B cell (primary cell): ENCODE measurements at regions of chr5 and their contacts with region 1.

Region 1: GRCh38 chr5:160021831-160022446 is 13.0 kb downstream of the TTC1 start:
- DNase-seq: peak; percentile 78
- ATAC-seq: peak; percentile 92
- H3K4me3 ChIP-seq: no peak overlapping the region
- H3K4me3 Mint-ChIP-seq: no peak overlapping the region
- H3K27ac ChIP-seq: no peak overlapping the region
- H3K27ac Mint-ChIP-seq: no peak overlapping the region
- H3K4me1 ChIP-seq: no peaks in the 10 kb centered on the region
- H3K4me1 Mint-ChIP-seq: peaks cover 5% of the 10 kb centered on the region
- H3K27me3 ChIP-seq: no peaks in the 10 kb centered on the region
- H3K27me3 Mint-ChIP-seq: no peaks in the 10 kb centered on the region
- CTCF ChIP-seq: peak; percentile 95

Region 2: DNA sequence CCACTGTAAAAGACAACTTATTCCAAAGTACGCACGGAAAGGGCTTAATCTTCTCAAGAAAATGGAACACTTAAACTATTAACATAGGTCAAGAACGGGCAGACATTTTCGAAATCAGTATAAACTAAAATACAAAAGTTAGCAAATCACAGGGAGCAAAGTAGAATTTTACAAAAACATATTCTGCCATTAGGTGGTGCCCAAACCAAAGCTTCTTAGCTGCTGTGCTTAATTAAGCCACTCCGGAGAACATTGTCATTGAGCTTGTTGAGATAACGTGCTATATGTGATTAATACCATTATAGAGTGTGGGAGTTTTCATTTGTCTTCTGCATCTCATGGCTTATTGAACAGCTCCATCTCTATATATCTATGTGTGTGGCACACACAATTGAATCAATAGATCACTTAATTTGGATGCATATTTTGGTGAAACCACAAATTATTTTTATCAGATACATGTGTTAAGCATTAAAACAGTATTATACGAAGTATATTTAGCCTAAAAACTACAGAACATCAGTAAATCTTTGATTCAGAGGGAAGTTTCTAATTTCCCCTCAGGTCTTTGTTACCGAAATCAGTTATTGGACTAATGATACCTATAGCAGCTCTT is 735.4 kb before region 1 on chr5:
- CTCF ChIA-PET with region 1: interaction called, 12 read pairs
- POLR2A ChIA-PET with region 1: no interaction called
- intact Hi-C with region 1: no loop called
- DNase-seq: peak; percentile 69
- ATAC-seq: peak; percentile 67
- H3K4me3 ChIP-seq: no peak overlapping the region
- H3K4me3 Mint-ChIP-seq: no peak overlapping the region
- H3K27ac ChIP-seq: no peak overlapping the region
- H3K27ac Mint-ChIP-seq: no peak overlapping the region
- H3K4me1 ChIP-seq: no peaks in the 10 kb centered on the region
- H3K4me1 Mint-ChIP-seq: no peaks in the 10 kb centered on the region
- H3K27me3 ChIP-seq: no peaks in the 10 kb centered on the region
- H3K27me3 Mint-ChIP-seq: no peaks in the 10 kb centered on the region
- CTCF ChIP-seq: peak; percentile 82

Region 3: GRCh38 chr5:159552751-159553150 is 469.2 kb before region 1 on chr5:
- CTCF ChIA-PET with region 1: no interaction called
- POLR2A ChIA-PET with region 1: no interaction called
- intact Hi-C with region 1: no loop called
- DNase-seq: no peak
- ATAC-seq: no peak
- H3K4me3 ChIP-seq: no peak overlapping the region
- H3K4me3 Mint-ChIP-seq: no peak overlapping the region
- H3K27ac ChIP-seq: no peak overlapping the region
- H3K27ac Mint-ChIP-seq: no peak overlapping the region
- H3K4me1 ChIP-seq: no peaks in the 10 kb centered on the region
- H3K4me1 Mint-ChIP-seq: no peaks in the 10 kb centered on the region
- H3K27me3 ChIP-seq: no peaks in the 10 kb centered on the region
- H3K27me3 Mint-ChIP-seq: no peaks in the 10 kb centered on the region
- CTCF ChIP-seq: no peak

Region 4: DNA sequence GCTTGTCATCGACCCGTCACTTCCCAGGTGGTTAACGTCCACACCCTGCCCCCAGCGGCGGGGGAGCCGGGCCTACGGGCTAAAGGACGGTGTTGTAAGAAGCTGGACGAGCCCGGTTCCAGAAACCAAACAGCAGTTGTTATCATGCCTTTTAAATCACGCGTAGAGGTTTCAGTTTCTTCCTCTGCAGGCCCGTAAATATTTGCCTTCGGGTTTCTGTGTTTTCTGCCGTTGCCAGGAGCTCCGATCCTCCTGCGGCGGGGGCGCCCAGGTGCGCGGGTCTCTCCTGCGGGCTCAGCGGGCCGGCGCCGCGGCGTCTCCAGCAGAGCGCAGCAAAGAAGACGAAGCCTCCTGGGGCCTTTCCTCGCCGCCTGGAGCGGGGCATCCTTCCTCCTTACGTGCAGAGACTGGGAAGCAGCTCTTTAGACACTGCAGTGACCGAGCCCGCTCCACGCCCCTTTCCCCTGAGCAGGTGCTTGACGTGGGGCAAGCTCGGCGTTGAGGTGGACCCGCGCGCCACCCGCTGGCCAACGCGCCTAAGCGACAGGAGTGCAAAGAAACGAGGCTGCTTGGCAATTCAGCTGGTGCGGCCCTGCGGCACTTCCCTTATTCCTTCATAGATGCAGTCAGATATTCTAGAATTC is 34.8 kb before region 1 on chr5:
- CTCF ChIA-PET with region 1: no interaction called
- POLR2A ChIA-PET with region 1: no interaction called
- intact Hi-C with region 1: no loop called
- DNase-seq: peak; percentile 88
- ATAC-seq: peak; percentile 98
- H3K4me3 ChIP-seq: peak overlapping the region in 4 of 5 experiments; percentile 42 to 60 (median 54)
- H3K4me3 Mint-ChIP-seq: peak overlapping the region; percentile 79
- H3K27ac ChIP-seq: peak overlapping the region in 1 of 2 donors; percentile 45
- H3K27ac Mint-ChIP-seq: peak overlapping the region; percentile 51
- H3K4me1 ChIP-seq: peaks cover 6 to 7% of the 10 kb centered on the region in 2 donors
- H3K4me1 Mint-ChIP-seq: peaks cover 7% of the 10 kb centered on the region
- H3K27me3 ChIP-seq: peaks cover 0 to 4% (median 0%) of the 10 kb centered on the region in 4 experiments
- H3K27me3 Mint-ChIP-seq: peaks cover 16% of the 10 kb centered on the region
- CTCF ChIP-seq: peak; percentile 79

Region 5: DNA sequence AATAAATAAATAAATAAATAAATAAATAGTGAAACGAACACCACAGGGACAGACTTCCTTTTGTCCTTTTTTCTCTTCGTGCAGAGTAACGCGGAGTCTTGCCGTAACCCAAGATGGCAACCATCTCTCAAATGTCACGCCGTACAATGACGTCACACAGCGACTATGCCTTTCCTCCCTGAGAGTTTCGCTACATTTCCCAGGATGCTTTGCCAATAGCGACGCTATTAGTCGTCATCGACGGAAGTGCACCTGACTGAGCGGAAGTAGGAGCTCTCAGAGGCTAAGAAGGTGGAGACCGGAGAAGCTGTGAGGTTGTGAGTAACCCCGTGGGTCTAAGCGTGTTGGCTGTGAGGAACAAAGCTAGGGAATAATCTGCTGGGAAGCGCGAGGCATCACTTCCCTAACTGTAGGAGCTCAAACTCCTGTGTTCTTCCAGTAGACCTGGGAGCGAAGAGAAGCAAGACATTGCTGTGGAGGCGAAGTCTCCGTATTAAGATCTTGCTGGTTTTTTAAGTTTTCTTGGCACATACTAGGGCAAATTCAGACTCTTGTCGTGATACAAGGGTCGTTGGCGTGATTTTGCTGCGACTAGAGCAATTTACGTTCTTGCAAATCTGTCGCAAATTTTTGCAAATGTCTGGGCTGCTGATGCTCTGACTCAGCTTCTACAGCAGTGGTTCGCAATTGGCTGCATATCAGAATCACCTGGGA is 12.9 kb before region 1 on chr5 and contains the start of gene TTC1:
- CTCF ChIA-PET with region 1: interaction called, 34 read pairs
- POLR2A ChIA-PET with region 1: interaction called, 7 read pairs
- intact Hi-C with region 1: no loop called
- DNase-seq: peak; percentile 98
- ATAC-seq: peak; percentile 97
- H3K4me3 ChIP-seq: peak within 1 kb of the TSS; percentile 85 to 100 (median 98)
- H3K4me3 Mint-ChIP-seq: peak within 1 kb of the TSS; percentile 87
- H3K27ac ChIP-seq: peak within 1 kb of the TSS; percentile 77 to 96
- H3K27ac Mint-ChIP-seq: peak within 1 kb of the TSS; percentile 83
- H3K4me1 ChIP-seq: peaks cover 18 to 19% of the 10 kb centered on the region in 2 donors
- H3K4me1 Mint-ChIP-seq: peaks cover 25% of the 10 kb centered on the region
- H3K27me3 ChIP-seq: no peaks in the 10 kb centered on the region
- H3K27me3 Mint-ChIP-seq: no peaks in the 10 kb centered on the region
- CTCF ChIP-seq: no peak
- total RNA-seq, gene TTC1: 37.5 and 40.4 TPM in 2 replicates

Region 6: DNA sequence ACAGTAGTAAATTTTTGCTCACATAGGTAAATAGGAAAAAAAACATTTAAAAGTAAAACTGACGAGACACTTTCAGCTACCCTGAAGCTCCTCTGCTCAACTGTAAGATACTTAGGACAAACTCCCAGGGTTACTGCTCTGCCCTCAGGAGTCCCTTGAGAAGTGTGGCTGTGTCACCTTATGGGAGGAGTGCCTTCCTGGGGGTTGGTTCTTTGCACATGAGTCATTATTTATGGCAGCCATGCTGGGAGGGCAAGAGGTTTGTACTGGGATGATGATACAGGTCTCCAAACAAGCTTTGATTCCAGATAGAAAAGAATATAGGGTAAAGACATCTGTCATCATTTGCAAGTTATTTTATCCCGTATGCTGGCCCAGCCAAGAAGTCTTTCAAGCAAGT is 32.9 kb after region 1 on chr5:
- CTCF ChIA-PET with region 1: interaction called, 11 read pairs
- POLR2A ChIA-PET with region 1: no interaction called
- intact Hi-C with region 1: no loop called
- DNase-seq: no peak
- ATAC-seq: no peak
- H3K4me3 ChIP-seq: no peak overlapping the region
- H3K4me3 Mint-ChIP-seq: no peak overlapping the region
- H3K27ac ChIP-seq: no peak overlapping the region
- H3K27ac Mint-ChIP-seq: no peak overlapping the region
- H3K4me1 ChIP-seq: no peaks in the 10 kb centered on the region
- H3K4me1 Mint-ChIP-seq: peaks cover 6% of the 10 kb centered on the region
- H3K27me3 ChIP-seq: no peaks in the 10 kb centered on the region
- H3K27me3 Mint-ChIP-seq: no peaks in the 10 kb centered on the region
- CTCF ChIP-seq: no peak

Region 7: GRCh38 chr5:160199410-160199911 is 177.5 kb after region 1 on chr5:
- CTCF ChIA-PET with region 1: interaction called, 3 read pairs
- POLR2A ChIA-PET with region 1: no interaction called
- intact Hi-C with region 1: loop called (anchors 5 kb)
- DNase-seq: peak; percentile 74
- ATAC-seq: peak; percentile 96
- H3K4me3 ChIP-seq: peak overlapping the region in 3 of 5 experiments; percentile 42 to 66 (median 53)
- H3K4me3 Mint-ChIP-seq: peak overlapping the region; percentile 83
- H3K27ac ChIP-seq: no peak overlapping the region
- H3K27ac Mint-ChIP-seq: no peak overlapping the region
- H3K4me1 ChIP-seq: peaks cover 10% of the 10 kb centered on the region in 2 donors
- H3K4me1 Mint-ChIP-seq: peaks cover 8% of the 10 kb centered on the region
- H3K27me3 ChIP-seq: peaks cover 0 to 21% (median 5%) of the 10 kb centered on the region in 4 experiments
- H3K27me3 Mint-ChIP-seq: peaks cover 35% of the 10 kb centered on the region
- CTCF ChIP-seq: peak; percentile 91

Region 8: DNA sequence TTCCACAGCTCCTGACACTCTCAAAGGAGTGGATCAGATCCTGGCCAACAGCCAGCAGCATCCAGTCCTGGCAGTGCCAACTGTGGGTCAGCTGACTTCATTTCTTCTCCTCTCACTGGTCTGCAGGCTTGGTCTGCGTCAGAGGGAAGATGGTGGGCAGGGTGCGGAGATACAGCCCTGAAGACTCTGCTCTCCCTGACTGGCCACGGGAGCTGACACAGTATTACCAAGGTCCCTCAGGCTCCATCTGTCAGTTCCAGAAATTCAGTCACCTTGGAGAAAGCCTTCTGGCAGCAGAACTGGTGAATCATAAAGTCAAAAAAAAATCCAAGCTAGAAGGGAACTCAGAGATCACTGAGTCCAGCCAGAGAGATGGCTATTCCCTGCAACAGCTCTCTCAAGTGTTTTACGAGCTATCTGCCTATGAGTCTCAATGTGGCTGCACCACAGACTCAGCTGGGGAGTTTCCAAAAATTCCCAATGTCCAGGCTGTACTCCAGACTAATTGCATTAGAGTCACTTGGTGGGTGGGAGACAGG is 320.5 kb after region 1 on chr5:
- CTCF ChIA-PET with region 1: interaction called, 140 read pairs
- POLR2A ChIA-PET with region 1: no interaction called
- intact Hi-C with region 1: no loop called
- DNase-seq: no peak
- ATAC-seq: no peak
- H3K4me3 ChIP-seq: no peak overlapping the region
- H3K4me3 Mint-ChIP-seq: no peak overlapping the region
- H3K27ac ChIP-seq: no peak overlapping the region
- H3K27ac Mint-ChIP-seq: no peak overlapping the region
- H3K4me1 ChIP-seq: no peaks in the 10 kb centered on the region
- H3K4me1 Mint-ChIP-seq: no peaks in the 10 kb centered on the region
- H3K27me3 ChIP-seq: peaks cover 0 to 4% (median 0%) of the 10 kb centered on the region in 4 experiments
- H3K27me3 Mint-ChIP-seq: no peaks in the 10 kb centered on the region
- CTCF ChIP-seq: no peak

Region 9: GRCh38 chr5:160390787-160391696 is 369.1 kb after region 1 on chr5:
- CTCF ChIA-PET with region 1: interaction called, 21 read pairs
- POLR2A ChIA-PET with region 1: no interaction called
- intact Hi-C with region 1: loop called (anchors 1 kb)
- DNase-seq: peak; percentile 27
- ATAC-seq: no peak
- H3K4me3 ChIP-seq: no peak overlapping the region
- H3K4me3 Mint-ChIP-seq: no peak overlapping the region
- H3K27ac ChIP-seq: no peak overlapping the region
- H3K27ac Mint-ChIP-seq: no peak overlapping the region
- H3K4me1 ChIP-seq: no peaks in the 10 kb centered on the region
- H3K4me1 Mint-ChIP-seq: no peaks in the 10 kb centered on the region
- H3K27me3 ChIP-seq: no peaks in the 10 kb centered on the region
- H3K27me3 Mint-ChIP-seq: no peaks in the 10 kb centered on the region
- CTCF ChIP-seq: peak; percentile 58